Left lung (tissue), 14 donors: ENCODE measurements at regions of chr4 and their contacts with region 1.

Region 1: DNA sequence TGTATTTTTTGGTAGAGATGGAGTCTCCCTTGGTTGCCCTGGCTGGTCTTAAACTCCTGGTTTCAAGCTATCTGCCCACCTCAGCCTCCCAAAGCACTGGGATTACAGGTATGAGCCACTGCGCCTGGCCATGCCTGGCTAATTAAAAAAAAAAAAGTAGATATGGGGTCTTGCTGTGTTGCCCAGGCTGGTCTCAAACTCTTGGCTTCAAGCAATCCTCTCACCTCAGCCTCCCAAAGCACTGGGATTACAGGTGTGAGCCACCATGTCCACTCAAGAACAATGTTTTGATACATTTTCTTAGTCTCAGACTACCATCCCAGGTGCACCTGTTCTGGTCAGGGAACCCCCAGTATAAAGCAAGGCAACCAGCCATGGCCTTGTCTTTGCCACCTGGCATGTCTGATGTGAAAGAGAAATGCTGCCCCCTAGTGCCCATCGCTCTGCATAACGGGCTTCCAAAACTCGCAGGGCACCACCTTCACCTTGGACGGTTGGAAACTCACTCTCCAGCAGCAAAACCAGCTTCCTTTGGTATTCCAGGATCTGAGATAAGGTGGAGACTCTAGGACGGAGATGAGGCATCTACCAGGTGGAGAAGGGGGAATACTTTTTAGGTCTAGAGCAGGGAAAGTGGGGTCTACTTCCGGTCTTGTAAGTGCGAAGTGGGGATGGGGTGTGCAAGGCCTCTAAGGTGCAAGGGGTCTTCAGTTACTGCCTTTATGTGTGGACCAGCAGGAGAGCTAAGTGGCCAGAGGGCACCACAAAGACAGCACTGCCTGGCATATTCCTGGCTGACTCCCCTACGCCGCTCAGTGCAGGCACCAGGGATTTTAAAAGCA is 47.7 kb upstream of the AFAP1 start:
- DNase-seq: peak in 3 of 4 donors; percentile 46 to 73 (median 64)
- ATAC-seq: peak; percentile 93
- H3K4me3 ChIP-seq: no peak overlapping the region
- H3K27ac ChIP-seq: no peak overlapping the region
- H3K4me1 ChIP-seq: no peaks in the 10 kb centered on the region
- H3K27me3 ChIP-seq: no peaks in the 10 kb centered on the region
- CTCF ChIP-seq: peak; percentile 80 to 87

Region 2: GRCh38 chr4:7802093-7802726 is 185.2 kb before region 1 on chr4:
- intact Hi-C with region 1: loop called in 1 of 2 experiments (anchors 5 kb)
- DNase-seq: peak in 2 of 4 donors; percentile 72 to 86
- ATAC-seq: peak; percentile 74
- H3K4me3 ChIP-seq: no peak overlapping the region
- H3K27ac ChIP-seq: no peak overlapping the region
- H3K4me1 ChIP-seq: peaks cover 28 to 34% of the 10 kb centered on the region in 2 donors
- H3K27me3 ChIP-seq: no peaks in the 10 kb centered on the region
- CTCF ChIP-seq: peak; percentile 74 to 85